B cell (primary cell): ENCODE measurements at regions of chr10 and their contacts with region 1.

Region 1: GRCh38 chr10:28663576-28664313 is 13.6 kb upstream of the BAMBI start:
- DNase-seq: peak; percentile 75
- ATAC-seq: peak; percentile 82
- H3K4me3 ChIP-seq: no peak overlapping the region
- H3K4me3 Mint-ChIP-seq: no peak overlapping the region
- H3K27ac ChIP-seq: no peak overlapping the region
- H3K27ac Mint-ChIP-seq: no peak overlapping the region
- H3K4me1 ChIP-seq: peaks cover 9 to 11% of the 10 kb centered on the region in 2 donors
- H3K4me1 Mint-ChIP-seq: peaks cover 6% of the 10 kb centered on the region
- H3K27me3 ChIP-seq: peaks cover 0 to 35% (median 25%) of the 10 kb centered on the region in 4 experiments
- H3K27me3 Mint-ChIP-seq: peaks cover 46% of the 10 kb centered on the region
- CTCF ChIP-seq: peak; percentile 93

Region 2: DNA sequence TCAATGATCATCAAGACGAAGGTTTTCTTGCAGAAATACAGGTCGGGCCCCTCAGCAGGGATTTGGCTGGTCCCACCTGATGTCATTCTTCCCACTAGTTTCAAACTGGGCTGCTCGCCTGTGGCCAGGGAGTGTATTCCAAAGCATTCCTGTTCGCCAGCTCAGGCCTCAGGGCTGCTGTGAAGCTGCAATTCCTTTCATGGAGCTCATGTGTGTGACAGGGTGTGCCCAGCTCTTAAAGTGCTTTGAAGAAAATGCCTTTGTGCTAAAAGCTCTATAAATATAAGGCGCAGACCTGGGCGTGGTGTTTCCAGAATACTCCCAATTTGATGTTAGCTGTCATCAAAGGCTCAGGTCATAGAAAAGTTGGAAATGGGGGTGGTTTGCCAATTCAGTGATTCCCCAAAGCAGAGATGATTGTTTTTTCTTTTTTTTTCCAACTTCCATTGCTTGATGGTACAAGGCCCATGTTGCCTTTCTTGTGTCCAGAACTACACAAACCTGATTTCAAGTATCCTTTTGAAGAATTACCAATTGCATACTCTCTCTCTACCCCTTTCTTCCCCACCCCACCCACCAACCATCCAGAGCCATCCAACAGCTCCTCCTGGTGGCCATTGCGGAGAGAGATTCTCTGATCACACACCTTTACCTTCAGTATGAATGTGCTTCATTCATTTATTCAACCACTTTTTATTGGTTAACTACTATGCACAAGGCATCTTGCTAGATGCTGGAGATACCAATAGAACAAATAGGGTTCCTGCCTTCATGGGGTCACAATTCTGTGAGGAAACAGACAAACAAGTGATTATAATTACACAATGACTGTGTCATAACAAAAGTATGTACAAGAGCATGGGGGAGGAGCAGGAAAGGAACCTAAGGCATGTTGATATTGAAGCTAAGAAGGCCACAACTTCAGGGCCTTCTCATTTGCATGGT is 327.9 kb after region 1 on chr10:
- CTCF ChIA-PET with region 1: interaction called, 29 read pairs
- POLR2A ChIA-PET with region 1: no interaction called
- intact Hi-C with region 1: no loop called
- DNase-seq: peak; percentile 33
- ATAC-seq: no peak
- H3K4me3 ChIP-seq: no peak overlapping the region
- H3K4me3 Mint-ChIP-seq: no peak overlapping the region
- H3K27ac ChIP-seq: no peak overlapping the region
- H3K27ac Mint-ChIP-seq: no peak overlapping the region
- H3K4me1 ChIP-seq: no peaks in the 10 kb centered on the region
- H3K4me1 Mint-ChIP-seq: no peaks in the 10 kb centered on the region
- H3K27me3 ChIP-seq: no peaks in the 10 kb centered on the region
- H3K27me3 Mint-ChIP-seq: no peaks in the 10 kb centered on the region
- CTCF ChIP-seq: peak; percentile 46

Region 3: GRCh38 chr10:29304264-29305030 is 640.7 kb after region 1 on chr10:
- CTCF ChIA-PET with region 1: interaction called, 13 read pairs
- POLR2A ChIA-PET with region 1: no interaction called
- intact Hi-C with region 1: no loop called
- DNase-seq: peak; percentile 50
- ATAC-seq: no peak
- H3K4me3 ChIP-seq: no peak overlapping the region
- H3K4me3 Mint-ChIP-seq: no peak overlapping the region
- H3K27ac ChIP-seq: no peak overlapping the region
- H3K27ac Mint-ChIP-seq: no peak overlapping the region
- H3K4me1 ChIP-seq: no peaks in the 10 kb centered on the region
- H3K4me1 Mint-ChIP-seq: no peaks in the 10 kb centered on the region
- H3K27me3 ChIP-seq: peaks cover 0 to 8% (median 0%) of the 10 kb centered on the region in 4 experiments
- H3K27me3 Mint-ChIP-seq: peaks cover 11% of the 10 kb centered on the region
- CTCF ChIP-seq: peak; percentile 54

Region 4: GRCh38 chr10:29448125-29448524 is 784.4 kb after region 1 on chr10:
- CTCF ChIA-PET with region 1: interaction called, 14 read pairs
- POLR2A ChIA-PET with region 1: no interaction called
- intact Hi-C with region 1: no loop called
- DNase-seq: peak; percentile 10
- ATAC-seq: no peak
- H3K4me3 ChIP-seq: no peak overlapping the region
- H3K4me3 Mint-ChIP-seq: no peak overlapping the region
- H3K27ac ChIP-seq: no peak overlapping the region
- H3K27ac Mint-ChIP-seq: no peak overlapping the region
- H3K4me1 ChIP-seq: no peaks in the 10 kb centered on the region
- H3K4me1 Mint-ChIP-seq: no peaks in the 10 kb centered on the region
- H3K27me3 ChIP-seq: no peaks in the 10 kb centered on the region
- H3K27me3 Mint-ChIP-seq: no peaks in the 10 kb centered on the region
- CTCF ChIP-seq: no peak

Region 5: GRCh38 chr10:29496341-29497162 is 832.8 kb after region 1 on chr10:
- CTCF ChIA-PET with region 1: interaction called, 10 read pairs
- POLR2A ChIA-PET with region 1: no interaction called
- intact Hi-C with region 1: no loop called
- DNase-seq: peak; percentile 38
- ATAC-seq: no peak
- H3K4me3 ChIP-seq: no peak overlapping the region
- H3K4me3 Mint-ChIP-seq: no peak overlapping the region
- H3K27ac ChIP-seq: no peak overlapping the region
- H3K27ac Mint-ChIP-seq: no peak overlapping the region
- H3K4me1 ChIP-seq: no peaks in the 10 kb centered on the region
- H3K4me1 Mint-ChIP-seq: no peaks in the 10 kb centered on the region
- H3K27me3 ChIP-seq: no peaks in the 10 kb centered on the region
- H3K27me3 Mint-ChIP-seq: peaks cover 13% of the 10 kb centered on the region
- CTCF ChIP-seq: peak; percentile 83

Region 6: DNA sequence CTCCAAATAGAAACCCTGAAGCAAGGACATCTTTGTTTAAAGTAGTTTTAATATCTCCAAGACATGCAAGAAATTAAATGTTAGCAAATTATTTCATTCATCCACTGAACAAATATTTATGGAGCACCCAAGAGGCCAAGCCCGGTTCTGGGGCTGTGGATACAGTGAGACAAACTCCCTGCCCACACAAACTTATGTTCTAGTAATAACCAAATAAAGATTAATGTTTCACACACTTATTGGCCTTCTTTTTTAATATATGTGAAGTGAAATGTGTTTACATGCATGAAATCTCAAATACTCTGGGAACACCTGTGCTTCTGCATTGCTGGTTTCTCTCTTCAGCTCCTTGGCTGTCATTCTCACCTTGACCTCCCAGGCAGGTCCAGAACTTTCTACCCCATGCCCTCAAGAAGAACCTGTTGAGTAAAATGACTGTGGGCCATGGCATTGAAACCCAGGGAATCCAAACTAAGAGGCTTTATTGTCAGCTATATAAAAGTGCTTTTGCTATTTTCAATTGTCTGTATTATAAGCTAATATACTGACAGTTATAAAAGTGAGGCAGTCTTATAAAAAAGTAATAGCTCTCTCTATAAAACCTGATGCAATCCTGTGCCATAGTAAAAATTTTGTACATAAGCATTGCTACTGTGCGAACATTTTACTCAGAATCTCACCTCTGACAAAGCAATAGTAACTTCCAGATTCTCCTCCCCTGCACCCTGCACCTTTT is 927.3 kb after region 1 on chr10:
- CTCF ChIA-PET with region 1: no interaction called
- POLR2A ChIA-PET with region 1: no interaction called
- intact Hi-C with region 1: loop called (anchors 5 kb)
- DNase-seq: peak; percentile 6
- ATAC-seq: no peak
- H3K4me3 ChIP-seq: no peak overlapping the region
- H3K4me3 Mint-ChIP-seq: no peak overlapping the region
- H3K27ac ChIP-seq: no peak overlapping the region
- H3K27ac Mint-ChIP-seq: no peak overlapping the region
- H3K4me1 ChIP-seq: peaks cover 5 to 6% of the 10 kb centered on the region in 2 donors
- H3K4me1 Mint-ChIP-seq: peaks cover 6% of the 10 kb centered on the region
- H3K27me3 ChIP-seq: no peaks in the 10 kb centered on the region
- H3K27me3 Mint-ChIP-seq: peaks cover 2% of the 10 kb centered on the region
- CTCF ChIP-seq: peak; percentile 54